MCF 10A (cell line): ENCODE measurements at regions of chr3 and their contacts with region 1.

Region 1: DNA sequence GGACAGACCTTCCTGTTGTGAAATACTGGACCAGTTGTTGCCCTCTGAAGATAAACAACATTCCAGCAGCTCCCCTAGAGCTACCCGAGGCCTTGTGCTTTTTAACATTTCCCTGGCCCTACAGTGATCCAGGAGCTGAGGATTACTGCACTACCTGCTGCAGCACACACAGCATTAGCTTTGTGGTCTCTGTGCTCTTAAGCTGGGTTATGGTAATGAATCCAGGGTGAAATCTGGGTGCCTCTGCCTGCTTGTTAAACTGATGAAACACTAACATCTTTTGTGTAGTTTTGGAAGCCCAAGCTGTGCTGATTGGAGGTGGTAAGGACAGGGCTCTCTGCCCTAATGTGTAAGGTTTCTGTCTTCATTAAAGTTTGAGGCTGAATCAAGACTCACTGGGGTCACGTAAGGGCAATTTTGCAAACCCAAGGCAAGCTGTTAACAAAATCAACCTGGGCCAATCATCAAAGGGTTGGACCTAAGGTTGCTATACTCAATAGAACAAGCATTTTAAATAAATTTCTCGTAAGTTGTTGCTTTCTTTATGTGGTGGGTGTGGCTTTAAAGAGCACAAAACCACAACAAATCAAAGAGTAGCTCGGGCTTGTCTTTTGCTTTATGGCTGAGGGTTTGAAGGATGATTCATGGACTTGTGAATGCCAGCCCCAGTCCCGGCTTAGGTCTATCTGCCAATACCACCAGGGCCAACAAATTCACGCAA is 183.9 kb downstream of the TPRG1 start:
- DNase-seq: peak; percentile 93
- H3K4me3 Mint-ChIP-seq: no peak overlapping the region
- H3K27ac Mint-ChIP-seq: peak overlapping the region; percentile 96
- H3K4me1 Mint-ChIP-seq: peaks cover 36% of the 10 kb centered on the region
- H3K27me3 Mint-ChIP-seq: no peaks in the 10 kb centered on the region
- CTCF ChIP-seq: no peak

Region 2: DNA sequence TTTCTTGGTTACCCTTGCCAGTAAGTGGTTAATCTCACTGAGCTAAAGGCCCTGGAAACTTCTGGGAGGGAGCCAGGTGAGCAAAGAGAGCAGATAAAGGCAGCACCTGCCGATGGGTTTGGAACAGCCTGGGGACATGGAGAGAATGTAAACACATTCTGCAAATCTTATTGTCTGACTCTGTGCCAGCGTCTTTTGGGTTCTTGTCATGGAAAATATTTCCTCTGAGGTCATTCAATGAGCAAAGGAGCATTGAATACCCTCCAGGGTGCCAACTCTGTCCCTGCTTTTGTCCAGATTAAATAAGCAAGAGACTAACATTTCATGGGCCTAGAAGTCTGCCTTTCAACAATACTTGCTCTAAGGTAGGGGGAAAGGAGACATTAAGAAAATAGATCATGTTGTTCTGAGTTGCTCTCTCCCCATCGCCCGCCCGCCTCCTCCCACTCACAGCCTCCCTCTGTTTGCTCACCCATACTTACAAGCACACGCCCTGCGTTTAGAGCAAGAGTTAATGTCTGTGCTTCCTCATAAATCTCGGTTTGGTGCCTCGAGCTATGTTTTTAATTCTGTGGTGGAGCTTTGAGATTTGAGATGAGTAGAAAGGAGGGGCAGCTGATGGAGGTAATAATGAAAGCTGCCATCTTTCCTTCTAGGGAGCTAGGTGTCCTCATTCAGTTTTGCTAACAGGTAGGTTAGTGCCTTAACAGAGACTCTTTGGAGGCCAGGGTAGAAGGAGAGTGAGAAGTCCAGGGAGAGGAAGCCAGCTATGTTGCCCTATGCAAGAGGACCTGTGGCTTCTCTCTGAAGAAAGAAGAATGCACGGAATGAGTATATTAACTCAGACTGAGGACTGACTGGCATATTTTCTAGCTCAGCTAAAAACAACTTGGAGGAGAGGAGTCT is 50.9 kb before region 1 on chr3:
- CTCF ChIA-PET with region 1: interaction called, 6 read pairs
- POLR2A ChIA-PET with region 1: interaction called, 267 read pairs
- intact Hi-C with region 1: no loop called
- DNase-seq: peak; percentile 96
- H3K4me3 Mint-ChIP-seq: peak overlapping the region; percentile 65
- H3K27ac Mint-ChIP-seq: peak overlapping the region; percentile 99
- H3K4me1 Mint-ChIP-seq: peaks cover 59% of the 10 kb centered on the region
- H3K27me3 Mint-ChIP-seq: no peaks in the 10 kb centered on the region
- CTCF ChIP-seq: no peak

Region 3: GRCh38 chr3:189369636-189370035 is 14.0 kb after region 1 on chr3:
- CTCF ChIA-PET with region 1: interaction called, 5 read pairs
- POLR2A ChIA-PET with region 1: interaction called, 13 read pairs
- intact Hi-C with region 1: no loop called
- DNase-seq: peak; percentile 28
- H3K4me3 Mint-ChIP-seq: no peak overlapping the region
- H3K27ac Mint-ChIP-seq: no peak overlapping the region
- H3K4me1 Mint-ChIP-seq: peaks cover 7% of the 10 kb centered on the region
- H3K27me3 Mint-ChIP-seq: no peaks in the 10 kb centered on the region
- CTCF ChIP-seq: no peak

Region 4: DNA sequence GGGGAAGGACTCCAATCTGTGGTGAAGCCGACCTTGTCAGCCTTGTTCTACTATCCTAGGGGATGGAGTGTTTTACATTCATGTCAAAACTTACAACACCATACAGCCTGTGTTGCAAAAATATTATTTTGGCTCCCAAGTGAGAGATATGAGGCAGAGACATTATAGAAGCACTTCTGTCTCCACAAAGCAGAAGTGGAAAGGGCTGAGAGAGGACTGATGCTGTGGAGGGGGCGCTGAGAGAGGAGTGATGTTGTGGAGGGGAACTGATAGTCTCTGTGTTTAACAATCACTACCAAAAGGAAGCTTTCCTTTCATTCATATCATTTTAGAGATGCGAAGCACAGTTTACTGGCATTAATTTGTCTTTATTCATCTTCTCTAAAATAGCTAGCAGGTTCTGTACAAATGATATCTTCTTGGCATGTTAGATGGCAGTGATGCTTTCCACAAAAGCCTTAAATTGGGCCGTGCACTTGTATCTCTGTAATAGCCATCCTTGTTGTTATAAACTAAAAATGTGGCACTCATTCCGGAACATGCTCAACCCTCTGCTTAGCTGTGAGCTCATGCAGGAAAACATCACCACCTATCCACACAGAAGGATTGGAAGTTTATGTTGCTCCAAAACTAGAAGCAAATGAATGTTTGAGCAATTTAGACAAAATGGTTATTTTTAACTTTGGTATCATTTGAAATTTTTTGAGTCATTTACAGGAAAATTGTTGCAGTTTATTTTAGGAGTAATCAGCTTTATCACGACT is 140.9 kb after region 1 on chr3:
- CTCF ChIA-PET with region 1: no interaction called
- POLR2A ChIA-PET with region 1: interaction called, 45 read pairs
- intact Hi-C with region 1: no loop called
- DNase-seq: no peak
- H3K4me3 Mint-ChIP-seq: no peak overlapping the region
- H3K27ac Mint-ChIP-seq: peak overlapping the region; percentile 57
- H3K4me1 Mint-ChIP-seq: peaks cover 22% of the 10 kb centered on the region
- H3K27me3 Mint-ChIP-seq: no peaks in the 10 kb centered on the region
- CTCF ChIP-seq: no peak

Region 5: DNA sequence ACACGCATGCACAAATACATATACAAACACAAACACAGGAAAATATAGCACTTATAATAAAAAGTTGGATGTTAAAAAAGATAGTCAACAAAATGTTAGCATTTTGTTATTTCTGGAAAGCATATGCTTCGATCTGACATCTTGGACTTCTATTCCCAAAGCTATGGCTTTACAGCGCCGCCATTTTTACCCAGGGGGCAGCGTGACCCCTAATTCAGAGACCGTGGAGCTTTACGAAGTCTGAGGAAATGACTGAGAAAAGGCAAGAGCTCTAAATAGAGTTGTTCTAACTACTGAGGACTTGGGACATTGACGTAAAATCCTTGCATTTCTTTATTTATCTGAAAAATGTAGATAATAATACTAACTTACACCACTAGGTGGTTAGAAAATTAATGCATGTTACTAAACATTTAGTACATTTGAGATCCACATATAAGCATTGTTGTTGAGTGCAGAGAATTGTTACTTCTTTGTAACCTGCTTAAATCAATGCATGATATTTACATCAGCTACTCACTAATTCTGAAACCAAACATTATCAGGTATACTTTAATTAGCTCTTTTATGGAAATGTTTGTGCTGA is 430.9 kb after region 1 on chr3:
- CTCF ChIA-PET with region 1: no interaction called
- POLR2A ChIA-PET with region 1: interaction called, 12 read pairs
- intact Hi-C with region 1: no loop called
- DNase-seq: no peak
- H3K4me3 Mint-ChIP-seq: no peak overlapping the region
- H3K27ac Mint-ChIP-seq: no peak overlapping the region
- H3K4me1 Mint-ChIP-seq: peaks cover 5% of the 10 kb centered on the region
- H3K27me3 Mint-ChIP-seq: no peaks in the 10 kb centered on the region
- CTCF ChIP-seq: peak; percentile 20